Activated CD4-positive, alpha-beta T cell treated with anti-CD3 and anti-CD28 coated beads for 36 hours (primary cell): ENCODE measurements at regions of chr7 and their contacts with region 1.

Region 1: GRCh38 chr7:954330-955238 is at the start of gene ADAP1:
- DNase-seq: peak; percentile 76
- ATAC-seq: peak; percentile 85
- H3K4me3 Mint-ChIP-seq: peak within 1 kb of the TSS; percentile 63
- H3K27ac Mint-ChIP-seq: no peak within 1 kb of the TSS
- H3K4me1 Mint-ChIP-seq: no peaks in the 10 kb centered on the region
- H3K27me3 Mint-ChIP-seq: peaks cover 8% of the 10 kb centered on the region
- total RNA-seq, gene ADAP1: 13.1 to 14.8 TPM

Region 2: GRCh38 chr7:271266-272107 is 683.1 kb before region 1 on chr7:
- CTCF ChIA-PET with region 1: no interaction called
- POLR2A ChIA-PET with region 1: no interaction called
- intact Hi-C with region 1: no loop called
- DNase-seq: no peak
- ATAC-seq: no peak
- H3K4me3 Mint-ChIP-seq: no peak overlapping the region
- H3K27ac Mint-ChIP-seq: no peak overlapping the region
- H3K4me1 Mint-ChIP-seq: no peaks in the 10 kb centered on the region
- H3K27me3 Mint-ChIP-seq: no peaks in the 10 kb centered on the region

Region 3: DNA sequence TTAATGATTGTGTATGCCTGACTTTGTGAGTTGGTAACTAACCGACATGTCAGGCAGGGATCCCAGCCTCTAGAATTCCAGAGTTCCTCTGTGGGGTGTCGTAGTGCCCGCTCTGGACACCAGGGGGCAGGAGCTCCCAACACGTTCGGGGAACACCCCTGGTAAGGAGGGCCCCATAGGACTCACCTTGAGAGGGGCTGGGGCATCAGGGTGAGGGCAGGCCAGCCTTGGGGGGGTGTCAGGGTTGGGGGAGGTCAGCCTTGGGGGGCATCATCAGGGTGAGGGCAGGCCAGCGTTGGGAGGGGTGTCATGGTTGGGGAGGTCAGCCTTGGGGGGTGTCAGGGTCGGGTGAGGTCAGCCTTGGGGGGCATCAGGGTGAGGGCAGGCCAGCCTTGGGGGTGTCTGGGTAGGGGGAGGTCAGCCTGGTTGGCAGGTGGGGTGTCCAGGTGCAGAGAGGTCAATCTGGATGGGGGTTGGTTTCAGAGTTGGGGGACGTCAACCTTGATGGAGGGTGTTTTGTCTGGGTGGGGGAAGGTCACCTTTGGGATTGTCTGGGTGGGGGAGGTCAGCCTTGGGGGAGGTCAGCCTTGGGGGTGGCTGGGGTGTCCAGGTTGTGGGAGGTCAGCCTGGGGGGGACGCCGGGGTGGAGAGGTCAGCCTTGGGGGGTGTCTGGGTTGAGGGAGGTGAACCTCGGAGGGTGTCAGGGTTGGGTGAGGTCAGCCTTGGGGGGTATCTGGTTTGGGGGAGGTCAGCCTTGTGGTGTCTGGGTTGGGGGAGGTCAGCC is 167.9 kb before region 1 on chr7:
- CTCF ChIA-PET with region 1: interaction called, 3 read pairs
- POLR2A ChIA-PET with region 1: no interaction called
- intact Hi-C with region 1: loop called in 1 of 2 experiments (anchors 2 kb)
- DNase-seq: peak; percentile 84
- ATAC-seq: peak; percentile 91
- H3K4me3 Mint-ChIP-seq: no peak overlapping the region
- H3K27ac Mint-ChIP-seq: no peak overlapping the region
- H3K4me1 Mint-ChIP-seq: no peaks in the 10 kb centered on the region
- H3K27me3 Mint-ChIP-seq: no peaks in the 10 kb centered on the region

Region 4: GRCh38 chr7:909358-910329 is 44.9 kb before region 1 on chr7:
- CTCF ChIA-PET with region 1: interaction called, 6 read pairs
- POLR2A ChIA-PET with region 1: no interaction called
- intact Hi-C with region 1: loop called (anchors 1 kb)
- DNase-seq: peak; percentile 37
- ATAC-seq: peak; percentile 28
- H3K4me3 Mint-ChIP-seq: peak overlapping the region; percentile 30
- H3K27ac Mint-ChIP-seq: no peak overlapping the region
- H3K4me1 Mint-ChIP-seq: peaks cover 10% of the 10 kb centered on the region
- H3K27me3 Mint-ChIP-seq: no peaks in the 10 kb centered on the region

Region 5: DNA sequence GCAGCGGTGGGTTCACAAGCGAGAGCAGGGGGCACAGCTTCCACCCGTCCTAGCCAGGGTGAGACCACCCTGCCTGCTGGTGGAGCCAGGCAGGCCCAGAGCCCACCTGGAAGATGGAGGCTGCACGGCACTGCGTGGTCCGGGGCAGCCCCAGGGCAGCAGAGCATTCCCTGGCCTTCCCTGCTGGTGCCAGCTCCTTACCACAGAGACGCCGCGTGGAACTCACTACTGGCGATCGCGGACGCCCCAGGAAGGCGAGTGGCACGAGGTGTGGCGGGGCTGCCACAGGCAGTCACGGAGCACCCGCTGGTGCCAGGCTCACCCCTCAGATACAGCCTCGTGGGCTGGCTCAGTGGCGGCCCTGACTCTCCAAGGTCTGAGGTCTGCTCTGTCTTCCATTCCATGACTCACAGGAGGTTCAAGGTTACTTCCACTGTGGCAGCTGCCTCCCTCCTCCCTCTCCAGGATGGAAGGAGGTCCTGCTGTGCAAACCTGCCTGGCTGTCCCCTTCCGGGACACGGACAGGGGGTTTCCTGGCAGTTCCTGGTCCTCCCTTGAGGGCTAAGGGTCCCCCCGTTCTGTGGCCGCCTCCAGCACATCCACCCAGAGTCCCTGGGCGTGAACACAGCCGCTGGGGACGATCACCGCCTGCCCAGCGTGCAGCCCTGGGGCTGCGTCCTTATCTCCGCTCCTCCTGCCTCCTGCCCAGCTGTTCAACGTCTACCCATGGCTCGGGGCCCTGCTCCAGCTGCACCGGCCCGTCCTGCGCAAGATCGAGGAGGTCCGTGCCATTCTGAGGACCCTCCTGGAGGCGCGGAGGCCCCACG is 31.5 kb after region 1 on chr7:
- CTCF ChIA-PET with region 1: no interaction called
- POLR2A ChIA-PET with region 1: no interaction called
- intact Hi-C with region 1: no loop called
- DNase-seq: no peak
- ATAC-seq: no peak
- H3K4me3 Mint-ChIP-seq: no peak overlapping the region
- H3K27ac Mint-ChIP-seq: no peak overlapping the region
- H3K4me1 Mint-ChIP-seq: no peaks in the 10 kb centered on the region
- H3K27me3 Mint-ChIP-seq: peaks cover 2% of the 10 kb centered on the region